H1 (cell line): ENCODE measurements at regions of chr21 and their contacts with region 1.

Region 1: DNA sequence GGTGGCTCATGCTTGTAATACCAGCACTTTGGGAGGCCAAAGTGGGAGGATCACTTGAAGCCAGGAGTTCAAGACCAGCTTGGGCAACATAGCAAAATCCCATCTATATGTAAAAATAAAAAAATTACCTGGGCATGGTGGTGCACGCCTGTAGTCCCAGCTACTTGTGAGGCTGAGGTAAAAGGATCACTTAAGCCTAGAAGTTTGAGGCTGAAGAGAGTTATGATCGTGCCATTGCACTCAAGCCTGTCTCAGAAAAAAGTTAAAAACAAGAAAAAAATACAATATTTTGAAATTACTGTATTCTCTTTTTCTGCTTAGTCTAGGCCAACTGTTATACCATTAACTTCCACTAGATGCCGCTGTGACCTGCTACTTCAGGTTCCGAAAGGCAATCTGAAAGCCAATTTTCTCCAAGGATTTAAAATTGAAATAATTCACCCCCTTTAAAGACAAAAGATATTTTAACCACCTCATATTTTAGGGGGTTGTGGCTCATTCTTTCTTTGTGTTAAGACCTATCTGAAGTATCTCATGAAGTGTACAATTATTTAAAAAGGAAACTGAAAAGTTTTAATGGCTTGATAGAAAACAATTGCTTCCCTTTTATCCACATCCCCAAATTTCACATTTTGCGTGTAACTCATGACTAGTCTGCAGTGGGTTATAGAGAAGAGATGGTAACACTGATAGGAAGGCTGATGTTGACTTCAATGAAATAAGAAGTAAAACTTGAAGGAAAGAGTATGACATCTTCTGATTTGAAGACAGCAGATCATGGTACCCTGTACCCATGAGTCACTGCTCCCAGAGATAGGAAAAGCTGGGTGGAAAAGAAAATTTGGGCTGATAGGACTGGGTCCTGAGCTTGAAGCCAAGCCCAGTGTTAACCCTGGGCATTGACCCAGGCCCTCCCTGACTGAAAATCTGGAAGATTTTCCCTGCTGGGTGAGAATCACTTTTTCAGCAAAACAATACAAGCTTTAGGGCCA is 24.4 kb upstream of the CLDN14 start:
- DNase-seq: no peak
- H3K4me3 ChIP-seq: no peak overlapping the region
- H3K27ac ChIP-seq: no peak overlapping the region
- H3K4me1 ChIP-seq: no peaks in the 10 kb centered on the region
- H3K27me3 ChIP-seq: no peaks in the 10 kb centered on the region
- CTCF ChIP-seq: peak in 2 of 3 experiments; percentile 68 to 73; a peak in 3 of 4 replicates
- EP300 ChIP-seq: no peak
- POLR2A ChIP-seq: no peak
- RAD21 ChIP-seq: peak; percentile 85 to 88

Region 2: GRCh38 chr21:36429947-36430546 is 74.3 kb before region 1 on chr21:
- CTCF ChIA-PET with region 1: no interaction called
- POLR2A ChIA-PET with region 1: no interaction called
- DNase-seq: peak in 1 of 2 experiments; percentile 54
- H3K4me3 ChIP-seq: no peak overlapping the region
- H3K27ac ChIP-seq: no peak overlapping the region
- H3K4me1 ChIP-seq: no peaks in the 10 kb centered on the region; a peak in 3 of 7 replicates
- H3K27me3 ChIP-seq: no peaks in the 10 kb centered on the region
- CTCF ChIP-seq: peak in 1 of 3 experiments; percentile 6; a peak in 1 of 4 replicates
- EP300 ChIP-seq: no peak
- POLR2A ChIP-seq: no peak
- RAD21 ChIP-seq: 0 out of 4 replicates have a peak, but pooled peaks of 1 of the 2 experiments have one; percentile 1

Region 3: DNA sequence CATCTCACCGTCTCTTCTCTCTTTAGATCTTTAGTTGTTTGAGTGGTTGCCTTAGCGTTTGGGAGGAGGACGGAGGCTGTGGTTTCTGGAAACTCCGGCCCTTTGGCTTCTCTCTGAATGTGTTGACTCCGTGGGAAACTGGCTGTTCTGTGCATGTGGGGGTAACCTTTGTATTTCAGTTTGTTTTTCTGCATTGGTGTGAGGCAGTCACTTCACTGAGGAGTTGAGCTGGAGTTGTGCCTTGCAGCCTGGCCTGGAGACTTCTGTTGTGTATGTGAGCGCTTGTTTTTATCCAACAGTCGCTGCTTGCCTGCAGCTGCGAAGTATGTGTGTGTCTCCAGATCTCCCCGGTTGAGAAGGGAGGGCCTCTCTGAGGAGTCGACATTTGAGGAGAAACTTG is 58.1 kb before region 1 on chr21:
- CTCF ChIA-PET with region 1: no interaction called
- POLR2A ChIA-PET with region 1: no interaction called
- DNase-seq: no peak
- H3K4me3 ChIP-seq: no peak overlapping the region
- H3K27ac ChIP-seq: no peak overlapping the region
- H3K4me1 ChIP-seq: no peaks in the 10 kb centered on the region
- H3K27me3 ChIP-seq: no peaks in the 10 kb centered on the region
- CTCF ChIP-seq: no peak
- EP300 ChIP-seq: no peak
- POLR2A ChIP-seq: no peak
- RAD21 ChIP-seq: no peak

Region 4: DNA sequence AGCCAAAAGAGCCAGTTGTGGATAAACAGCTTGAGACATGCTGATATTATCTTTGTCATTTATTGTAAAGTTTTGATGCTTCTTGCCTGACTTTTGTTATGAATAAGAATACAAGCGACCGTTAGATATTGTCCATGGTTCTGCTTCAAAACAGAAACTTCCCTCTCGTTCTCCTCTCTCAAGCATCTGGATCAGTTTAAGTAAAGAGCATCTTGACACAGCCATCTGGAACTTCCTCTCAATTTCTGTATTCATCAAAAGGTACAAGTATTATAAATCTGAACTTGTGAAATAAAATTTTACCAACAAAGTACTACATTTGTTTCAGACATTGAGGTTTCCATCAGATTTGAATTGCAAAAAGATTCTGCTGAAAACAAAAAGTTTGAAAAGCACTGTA is 11.9 kb after region 1 on chr21:
- CTCF ChIA-PET with region 1: interaction called, 22 read pairs
- POLR2A ChIA-PET with region 1: no interaction called
- DNase-seq: no peak
- H3K4me3 ChIP-seq: no peak overlapping the region
- H3K27ac ChIP-seq: no peak overlapping the region
- H3K4me1 ChIP-seq: no peaks in the 10 kb centered on the region
- H3K27me3 ChIP-seq: no peaks in the 10 kb centered on the region
- CTCF ChIP-seq: no peak
- EP300 ChIP-seq: no peak
- POLR2A ChIP-seq: no peak
- RAD21 ChIP-seq: no peak

Region 5: GRCh38 chr21:36528716-36529115 is 24.4 kb after region 1 on chr21:
- CTCF ChIA-PET with region 1: interaction called, 11 read pairs
- POLR2A ChIA-PET with region 1: no interaction called
- DNase-seq: no peak
- H3K4me3 ChIP-seq: no peak overlapping the region
- H3K27ac ChIP-seq: no peak overlapping the region
- H3K4me1 ChIP-seq: no peaks in the 10 kb centered on the region
- H3K27me3 ChIP-seq: no peaks in the 10 kb centered on the region
- CTCF ChIP-seq: no peak
- EP300 ChIP-seq: no peak
- POLR2A ChIP-seq: no peak
- RAD21 ChIP-seq: no peak